SK-N-SH (cell line): ENCODE measurements at regions of chr5 and their contacts with region 1.

Region 1: DNA sequence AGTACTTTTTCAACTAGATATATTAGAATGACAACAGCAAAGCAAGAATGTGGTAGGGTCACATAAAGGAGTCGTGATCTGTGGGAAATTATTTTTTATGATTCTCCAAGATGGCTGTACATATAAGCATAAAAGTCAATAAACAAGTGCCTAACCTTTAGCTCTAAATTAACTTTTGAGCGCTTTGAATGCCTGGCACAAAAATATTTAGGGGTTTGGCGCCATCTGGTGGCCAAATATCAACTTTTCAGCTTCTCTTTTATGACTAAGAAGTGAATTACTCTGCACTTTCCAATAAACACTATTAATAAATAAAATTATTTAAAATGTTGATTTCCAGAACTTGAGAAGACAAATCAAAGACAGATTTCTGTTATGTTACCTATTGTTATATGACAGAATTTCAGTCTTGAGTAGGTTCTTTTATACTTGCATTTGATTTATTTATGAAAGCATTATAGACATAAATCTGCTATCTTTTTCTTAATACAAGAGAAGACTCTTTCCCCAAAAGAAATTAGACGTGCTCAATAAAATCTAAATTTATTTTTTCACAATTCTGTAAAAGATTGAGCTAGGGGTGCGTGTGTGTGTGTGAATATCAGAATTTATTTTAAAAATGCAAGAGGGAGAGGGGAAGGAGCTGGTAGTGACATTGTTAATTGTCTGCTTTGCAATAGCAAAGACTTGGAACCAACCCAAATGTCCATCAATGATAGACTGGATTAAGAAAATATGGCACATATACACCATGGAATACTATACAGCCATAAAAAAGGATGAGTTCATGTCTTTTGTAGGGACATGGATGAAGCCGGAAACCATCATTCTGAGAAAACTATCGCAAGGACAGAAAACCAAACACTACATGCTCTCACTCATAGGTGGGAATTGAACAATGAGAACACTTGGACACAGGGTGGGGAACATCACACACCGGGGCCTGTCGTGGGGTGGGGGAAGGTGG is 36.7 kb upstream of the ARRDC3 start:
- DNase-seq: peak; percentile 5
- H3K4me3 ChIP-seq: no peak overlapping the region; a peak in 1 of 4 replicates
- H3K27ac ChIP-seq: no peak overlapping the region
- H3K4me1 ChIP-seq: no peaks in the 10 kb centered on the region; a peak in 2 of 4 replicates
- H3K27me3 ChIP-seq: no peaks in the 10 kb centered on the region
- CTCF ChIP-seq: peak; percentile 81
- EP300 ChIP-seq: no peak
- RAD21 ChIP-seq: peak; percentile 84

Region 2: GRCh38 chr5:90793183-90793582 is 626.7 kb before region 1 on chr5:
- CTCF ChIA-PET with region 1: interaction called, 13 read pairs
- POLR2A ChIA-PET with region 1: no interaction called
- DNase-seq: no peak
- H3K4me3 ChIP-seq: no peak overlapping the region
- H3K27ac ChIP-seq: no peak overlapping the region
- H3K4me1 ChIP-seq: no peaks in the 10 kb centered on the region
- H3K27me3 ChIP-seq: no peaks in the 10 kb centered on the region; the same call in 1 of the 2 replicates
- CTCF ChIP-seq: peak; percentile 31
- EP300 ChIP-seq: no peak
- RAD21 ChIP-seq: no peak

Region 3: GRCh38 chr5:90866333-90866732 is 553.5 kb before region 1 on chr5:
- CTCF ChIA-PET with region 1: interaction called, 118 read pairs
- POLR2A ChIA-PET with region 1: no interaction called
- DNase-seq: peak; percentile 48
- H3K4me3 ChIP-seq: no peak overlapping the region; a peak in 1 of 4 replicates
- H3K27ac ChIP-seq: no peak overlapping the region; a peak in 1 of 4 replicates
- H3K4me1 ChIP-seq: peaks cover 0 to 6% of the 10 kb centered on the region in 2 experiments; a peak in 2 of 4 replicates
- H3K27me3 ChIP-seq: no peaks in the 10 kb centered on the region
- CTCF ChIP-seq: peak; percentile 59
- EP300 ChIP-seq: no peak
- RAD21 ChIP-seq: peak; percentile 82

Region 4: GRCh38 chr5:91397791-91398190 is 22.1 kb before region 1 on chr5:
- CTCF ChIA-PET with region 1: interaction called, 12 read pairs
- POLR2A ChIA-PET with region 1: no interaction called
- DNase-seq: no peak
- H3K4me3 ChIP-seq: no peak overlapping the region
- H3K27ac ChIP-seq: no peak overlapping the region
- H3K4me1 ChIP-seq: no peaks in the 10 kb centered on the region; a peak in 1 of 4 replicates
- H3K27me3 ChIP-seq: no peaks in the 10 kb centered on the region
- CTCF ChIP-seq: no peak
- EP300 ChIP-seq: no peak
- RAD21 ChIP-seq: no peak

Region 5: DNA sequence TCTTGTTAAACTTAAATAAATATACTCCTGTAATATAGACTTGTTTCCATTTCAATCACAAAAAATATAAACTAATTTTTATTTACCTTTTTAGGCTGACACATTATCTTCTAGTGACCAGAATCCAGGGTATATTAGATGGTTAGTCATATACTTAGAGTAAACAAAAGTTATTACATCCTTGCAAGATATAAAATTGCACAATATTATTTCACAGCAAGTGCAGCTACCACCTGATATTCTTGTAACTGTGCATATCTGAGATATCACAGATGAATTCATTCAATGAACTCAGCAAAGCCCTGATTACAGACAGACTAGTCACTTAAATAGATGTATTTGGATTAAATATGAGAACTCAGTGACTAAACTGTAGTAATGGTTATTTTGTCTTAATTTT is 11.1 kb before region 1 on chr5:
- CTCF ChIA-PET with region 1: interaction called, 40 read pairs
- POLR2A ChIA-PET with region 1: no interaction called
- DNase-seq: no peak
- H3K4me3 ChIP-seq: no peak overlapping the region
- H3K27ac ChIP-seq: no peak overlapping the region
- H3K4me1 ChIP-seq: no peaks in the 10 kb centered on the region; a peak in 1 of 4 replicates
- H3K27me3 ChIP-seq: no peaks in the 10 kb centered on the region
- CTCF ChIP-seq: no peak
- EP300 ChIP-seq: no peak
- RAD21 ChIP-seq: no peak